B cell (primary cell): ENCODE measurements at regions of chr1 and their contacts with region 1.

Region 1: DNA sequence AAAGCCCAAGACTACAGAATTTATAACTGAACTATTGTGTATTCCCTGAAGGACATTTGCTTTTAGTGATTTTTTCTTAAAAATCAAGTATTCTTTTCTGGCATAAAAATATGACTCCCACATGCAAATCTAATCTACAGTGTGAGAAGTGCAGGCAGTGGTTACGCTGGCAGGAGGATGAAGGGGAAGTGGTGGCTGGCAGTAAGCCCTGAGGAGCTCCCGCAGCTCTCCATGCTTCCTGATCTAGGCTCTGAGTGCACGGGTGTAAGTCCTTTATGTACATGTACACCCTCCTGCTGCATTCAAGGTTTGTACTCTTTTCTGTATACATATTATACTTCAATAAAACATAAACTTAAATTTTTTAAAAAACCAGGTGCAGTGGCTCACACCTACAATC is 67.5 kb upstream of the PRDX6 start:
- DNase-seq: peak; percentile 73
- ATAC-seq: peak; percentile 22
- H3K4me3 ChIP-seq: no peak overlapping the region
- H3K4me3 Mint-ChIP-seq: peak overlapping the region; percentile 64
- H3K27ac ChIP-seq: peak overlapping the region; percentile 89 to 97
- H3K27ac Mint-ChIP-seq: peak overlapping the region; percentile 87
- H3K4me1 ChIP-seq: peaks cover 76 to 88% of the 10 kb centered on the region in 2 donors
- H3K4me1 Mint-ChIP-seq: peaks cover 79% of the 10 kb centered on the region
- H3K27me3 ChIP-seq: no peaks in the 10 kb centered on the region
- H3K27me3 Mint-ChIP-seq: no peaks in the 10 kb centered on the region
- CTCF ChIP-seq: no peak

Region 2: DNA sequence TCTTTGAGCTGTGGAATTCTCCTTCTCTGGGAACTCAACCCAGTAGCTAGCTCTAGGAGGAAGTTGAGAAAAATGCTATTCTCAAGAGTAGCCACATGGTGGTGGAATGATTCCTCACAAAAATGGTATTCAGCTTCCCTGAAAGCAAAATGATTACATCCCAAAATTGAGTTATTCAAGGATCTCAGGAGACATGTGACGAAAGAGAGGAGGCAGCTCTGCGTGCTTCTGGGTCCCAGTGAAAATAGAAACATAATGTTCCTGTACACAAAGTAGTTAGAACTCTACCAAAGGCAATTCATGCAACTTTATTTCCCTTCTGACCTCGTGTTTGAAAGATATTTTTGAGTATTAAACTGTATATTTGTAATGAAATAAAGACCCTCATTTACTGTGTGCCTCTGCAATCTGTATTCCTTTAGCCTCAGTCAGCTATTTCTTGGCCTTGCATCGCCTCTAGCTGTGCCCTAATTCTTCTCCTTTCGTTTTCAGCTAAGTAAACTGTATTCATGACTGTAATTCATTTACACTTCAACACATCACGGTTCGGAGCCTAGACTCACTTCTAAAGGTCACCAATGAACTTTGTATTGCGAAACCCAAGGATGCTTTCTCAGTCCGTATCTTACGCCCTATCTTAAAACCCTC is 583.4 kb before region 1 on chr1:
- CTCF ChIA-PET with region 1: interaction called, 14 read pairs
- POLR2A ChIA-PET with region 1: no interaction called
- intact Hi-C with region 1: no loop called
- DNase-seq: peak; percentile 43
- ATAC-seq: peak; percentile 62
- H3K4me3 ChIP-seq: peak overlapping the region in 1 of 5 experiments; percentile 13
- H3K4me3 Mint-ChIP-seq: no peak overlapping the region
- H3K27ac ChIP-seq: no peak overlapping the region
- H3K27ac Mint-ChIP-seq: no peak overlapping the region
- H3K4me1 ChIP-seq: peaks cover 9% of the 10 kb centered on the region in 2 donors
- H3K4me1 Mint-ChIP-seq: no peaks in the 10 kb centered on the region
- H3K27me3 ChIP-seq: no peaks in the 10 kb centered on the region
- H3K27me3 Mint-ChIP-seq: no peaks in the 10 kb centered on the region
- CTCF ChIP-seq: peak; percentile 63

Region 3: DNA sequence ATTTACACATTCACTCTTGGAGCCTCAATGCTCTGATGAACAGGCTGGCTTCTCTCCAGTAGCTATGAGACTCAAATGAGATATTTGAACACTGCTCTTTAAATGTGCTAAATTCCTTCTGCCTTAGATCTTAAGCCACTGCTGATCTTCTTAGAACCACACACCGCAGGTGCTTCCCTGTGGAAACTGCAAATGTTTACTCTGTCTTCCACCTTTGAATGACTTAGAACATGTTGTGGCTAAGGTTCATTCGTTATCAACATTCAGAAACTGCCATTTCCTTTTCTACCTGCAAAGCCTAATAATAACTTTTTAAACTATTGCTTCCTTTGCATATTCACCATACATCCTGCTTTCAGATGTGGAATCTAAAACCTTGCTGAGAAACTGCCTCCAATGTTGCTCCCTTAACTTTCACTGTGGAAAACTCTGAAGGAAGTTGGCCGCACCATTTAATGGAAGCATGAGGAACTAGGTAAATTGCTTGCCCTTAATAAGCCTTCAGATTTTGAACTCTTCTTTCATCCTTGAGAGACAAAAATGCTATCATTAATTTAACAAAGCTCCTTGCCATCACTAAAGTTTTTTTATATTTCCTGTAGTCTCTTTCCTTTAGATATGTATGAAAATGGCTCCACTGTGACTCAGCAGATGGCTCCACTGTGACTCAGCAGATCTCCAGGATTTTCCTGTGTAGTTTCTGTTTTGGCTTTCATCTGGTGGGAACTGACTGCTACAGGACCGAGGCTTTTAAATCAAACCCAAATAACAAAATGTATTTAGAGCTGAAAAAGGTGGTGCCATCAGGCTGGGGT is 502.6 kb before region 1 on chr1:
- CTCF ChIA-PET with region 1: no interaction called
- POLR2A ChIA-PET with region 1: no interaction called
- intact Hi-C with region 1: loop called (anchors 10 kb)
- DNase-seq: peak; percentile 31
- ATAC-seq: peak; percentile 36
- H3K4me3 ChIP-seq: peak overlapping the region in 2 of 5 experiments; percentile 5 to 48
- H3K4me3 Mint-ChIP-seq: peak overlapping the region; percentile 55
- H3K27ac ChIP-seq: peak overlapping the region in 1 of 2 donors; percentile 54
- H3K27ac Mint-ChIP-seq: peak overlapping the region; percentile 43
- H3K4me1 ChIP-seq: peaks cover 18 to 20% of the 10 kb centered on the region in 2 donors
- H3K4me1 Mint-ChIP-seq: peaks cover 24% of the 10 kb centered on the region
- H3K27me3 ChIP-seq: no peaks in the 10 kb centered on the region
- H3K27me3 Mint-ChIP-seq: no peaks in the 10 kb centered on the region
- CTCF ChIP-seq: no peak

Region 4: DNA sequence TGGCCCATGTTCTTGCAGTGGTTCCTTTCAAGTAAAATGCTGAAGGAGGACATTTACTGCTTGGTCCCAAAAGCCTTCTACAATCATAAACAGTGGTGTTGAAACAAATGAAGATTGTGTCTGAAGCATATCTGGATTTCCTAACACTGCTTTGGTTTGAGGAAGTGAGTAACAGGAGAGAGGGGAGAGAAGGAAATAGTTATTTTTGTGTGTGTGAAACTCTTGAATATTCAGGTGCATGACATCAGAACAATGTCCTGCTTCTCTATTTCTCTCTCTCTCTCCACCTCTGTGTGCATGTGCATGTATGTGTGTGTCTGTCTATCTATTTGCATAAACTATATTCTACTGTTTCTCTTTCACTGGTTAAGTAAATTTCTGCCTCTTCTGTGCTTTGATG is 297.5 kb before region 1 on chr1:
- CTCF ChIA-PET with region 1: no interaction called
- POLR2A ChIA-PET with region 1: no interaction called
- intact Hi-C with region 1: loop called (anchors 10 kb)
- DNase-seq: peak; percentile 73
- ATAC-seq: peak; percentile 94
- H3K4me3 ChIP-seq: no peak overlapping the region
- H3K4me3 Mint-ChIP-seq: peak overlapping the region; percentile 12
- H3K27ac ChIP-seq: peak overlapping the region; percentile 10 to 36
- H3K27ac Mint-ChIP-seq: peak overlapping the region; percentile 28
- H3K4me1 ChIP-seq: peaks cover 16 to 20% of the 10 kb centered on the region in 2 donors
- H3K4me1 Mint-ChIP-seq: peaks cover 36% of the 10 kb centered on the region
- H3K27me3 ChIP-seq: no peaks in the 10 kb centered on the region
- H3K27me3 Mint-ChIP-seq: no peaks in the 10 kb centered on the region
- CTCF ChIP-seq: no peak

Region 5: GRCh38 chr1:173269490-173270230 is 140.0 kb before region 1 on chr1:
- CTCF ChIA-PET with region 1: no interaction called
- POLR2A ChIA-PET with region 1: no interaction called
- intact Hi-C with region 1: no loop called
- DNase-seq: no peak
- ATAC-seq: no peak
- H3K4me3 ChIP-seq: no peak overlapping the region
- H3K4me3 Mint-ChIP-seq: no peak overlapping the region
- H3K27ac ChIP-seq: no peak overlapping the region
- H3K27ac Mint-ChIP-seq: no peak overlapping the region
- H3K4me1 ChIP-seq: no peaks in the 10 kb centered on the region
- H3K4me1 Mint-ChIP-seq: peaks cover 15% of the 10 kb centered on the region
- H3K27me3 ChIP-seq: no peaks in the 10 kb centered on the region
- H3K27me3 Mint-ChIP-seq: no peaks in the 10 kb centered on the region
- CTCF ChIP-seq: no peak